Transverse colon (tissue), 4 donors: ENCODE measurements at regions of chr4 and their contacts with region 1.

Region 1: GRCh38 chr4:142574306-142574705 is 271.8 kb downstream of the INPP4B start:
- DNase-seq: no peak
- H3K4me3 ChIP-seq: no peak overlapping the region
- H3K27ac ChIP-seq: no peak overlapping the region
- H3K4me1 ChIP-seq: peaks cover 0 to 1% (median 0%) of the 10 kb centered on the region in 4 donors
- H3K27me3 ChIP-seq: no peaks in the 10 kb centered on the region
- CTCF ChIP-seq: no peak
- EP300 ChIP-seq: no peak
- POLR2A ChIP-seq: no peak

Region 2: GRCh38 chr4:142331132-142331531 is 243.2 kb before region 1 on chr4:
- in situ Hi-C with region 1: no loop called
- intact Hi-C with region 1: no loop called
- DNase-seq: no peak
- H3K4me3 ChIP-seq: no peak overlapping the region
- H3K27ac ChIP-seq: peak overlapping the region in 1 of 4 donors; percentile 30
- H3K4me1 ChIP-seq: peaks cover 0 to 5% (median 0%) of the 10 kb centered on the region in 4 donors
- H3K27me3 ChIP-seq: no peaks in the 10 kb centered on the region
- CTCF ChIP-seq: no peak
- EP300 ChIP-seq: no peak
- POLR2A ChIP-seq: no peak

Region 3: DNA sequence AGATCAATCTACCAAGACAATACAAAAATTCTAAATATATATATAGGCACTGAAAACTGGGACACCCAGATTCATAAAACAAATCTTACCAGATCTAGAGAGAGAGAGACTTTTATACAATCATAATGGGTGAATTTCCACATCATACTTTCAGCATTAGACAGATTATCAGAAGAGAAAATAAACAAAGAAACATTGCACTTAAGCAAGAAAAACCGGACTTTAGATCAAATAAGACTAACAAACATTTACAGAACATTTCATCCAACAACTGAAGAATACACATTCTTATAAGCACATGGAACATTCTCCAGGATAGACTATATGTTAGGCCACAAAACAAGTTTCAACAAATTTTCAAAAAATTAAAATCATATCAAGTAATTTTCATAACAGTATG is 26.7 kb after region 1 on chr4:
- in situ Hi-C with region 1: no loop called
- intact Hi-C with region 1: loop called (anchors 1 kb)
- DNase-seq: no peak
- H3K4me3 ChIP-seq: no peak overlapping the region
- H3K27ac ChIP-seq: no peak overlapping the region
- H3K4me1 ChIP-seq: peaks cover 0 to 10% (median 3%) of the 10 kb centered on the region in 4 donors
- H3K27me3 ChIP-seq: no peaks in the 10 kb centered on the region
- CTCF ChIP-seq: no peak
- EP300 ChIP-seq: no peak
- POLR2A ChIP-seq: no peak